ENCODE measurements at regions of chr18 and their contacts with region 1.

Region 1: DNA sequence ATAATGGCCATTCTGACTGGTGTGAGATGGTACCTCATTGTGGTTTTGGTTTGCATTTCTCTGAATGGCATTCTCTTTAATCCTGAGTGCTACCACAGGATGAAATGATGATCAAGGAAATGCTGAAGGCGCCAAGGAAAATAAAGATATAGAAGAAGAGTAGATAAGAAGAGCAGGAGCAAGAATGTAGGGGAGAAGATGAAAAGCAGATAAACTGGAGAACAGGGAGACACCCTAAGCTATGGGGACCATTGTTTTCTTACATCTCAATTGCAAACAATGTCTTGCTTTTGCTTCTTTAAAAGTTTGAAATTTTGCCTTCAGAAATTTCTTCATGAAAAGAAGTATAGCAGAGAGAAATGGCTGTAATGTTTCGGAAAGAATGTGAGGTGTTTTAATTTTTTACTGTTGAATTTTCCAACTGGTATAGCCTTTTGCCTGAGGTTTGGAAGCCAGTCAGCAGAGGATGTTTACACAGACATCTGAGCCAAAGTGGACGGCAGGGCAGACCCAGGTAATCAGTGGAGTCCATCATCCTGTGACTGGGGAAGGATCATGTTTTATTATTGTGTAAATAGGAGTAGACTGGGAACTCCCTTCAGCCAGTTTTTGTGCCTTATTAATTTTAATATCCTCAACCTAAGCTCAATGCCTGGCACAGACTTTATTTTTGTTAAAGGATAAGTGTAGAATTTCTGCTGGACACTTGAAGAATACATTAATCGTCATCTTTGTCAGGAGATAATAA is 141.8 kb upstream of the GAREM1 start:
- DNase-seq: peak; percentile 55

Region 2: GRCh38 chr18:32138332-32138982 is 474.0 kb before region 1 on chr18:
- CTCF ChIA-PET with region 1: no interaction called
- POLR2A ChIA-PET with region 1: no interaction called
- DNase-seq: no peak

Region 3: GRCh38 chr18:32598144-32598543 is 14.3 kb before region 1 on chr18:
- CTCF ChIA-PET with region 1: interaction called, 11 read pairs
- POLR2A ChIA-PET with region 1: no interaction called
- DNase-seq: no peak

Region 4: GRCh38 chr18:32629981-32630700 is 17.7 kb after region 1 on chr18:
- CTCF ChIA-PET with region 1: no interaction called
- POLR2A ChIA-PET with region 1: no interaction called
- DNase-seq: no peak

Region 5: DNA sequence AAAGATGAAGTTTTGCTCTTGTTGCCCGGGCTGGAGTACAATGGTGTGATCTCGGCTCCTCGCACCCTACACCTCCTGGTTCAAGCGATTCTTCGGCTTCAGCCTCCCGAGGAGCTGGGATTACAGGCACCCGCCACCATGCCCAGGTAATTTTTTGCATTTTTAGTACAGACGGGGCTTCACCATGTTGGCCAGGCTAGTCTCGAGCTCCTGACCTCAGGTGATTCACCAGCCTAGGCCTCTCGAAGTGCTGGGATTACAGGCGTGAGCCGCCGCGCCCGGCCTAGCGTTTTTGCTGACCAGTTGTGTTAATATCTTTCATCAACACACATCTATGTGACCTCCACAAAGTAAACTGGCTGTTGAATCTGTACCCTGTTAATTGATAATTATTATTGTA is 209.7 kb after region 1 on chr18:
- CTCF ChIA-PET with region 1: no interaction called
- POLR2A ChIA-PET with region 1: no interaction called
- DNase-seq: no peak